K562 (cell line): ENCODE measurements at regions of chr14 and their contacts with region 1.

Region 1: GRCh38 chr14:30656190-30656632 is 34.1 kb downstream of the SCFD1 start:
- DNase-seq: peak in 3 of 4 experiments; percentile 13 to 37 (median 14)
- ATAC-seq: peak; percentile 70
- H3K4me3 ChIP-seq: no peak overlapping the region
- H3K27ac ChIP-seq: no peak overlapping the region
- H3K4me1 ChIP-seq: peaks cover 0 to 3% of the 10 kb centered on the region in 2 experiments; a peak in 1 of 5 replicates
- H3K27me3 ChIP-seq: no peaks in the 10 kb centered on the region
- CTCF ChIP-seq: peak; percentile 45 to 61 (median 57)
- EP300 ChIP-seq: no peak
- POLR2A ChIP-seq: no peak
- RAD21 ChIP-seq: peak in 1 of 2 experiments; percentile 26; a peak in 2 of 4 replicates

Region 2: GRCh38 chr14:30681752-30682355 is 25.6 kb after region 1 on chr14:
- CTCF ChIA-PET with region 1: no interaction called
- POLR2A ChIA-PET with region 1: no interaction called
- in situ Hi-C with region 1: no loop called
- intact Hi-C with region 1: loop called (anchors 1 kb)
- DNase-seq: peak in 1 of 4 experiments; percentile 7
- ATAC-seq: no peak
- H3K4me3 ChIP-seq: no peak overlapping the region
- H3K27ac ChIP-seq: no peak overlapping the region
- H3K4me1 ChIP-seq: no peaks in the 10 kb centered on the region
- H3K27me3 ChIP-seq: no peaks in the 10 kb centered on the region
- CTCF ChIP-seq: peak in 1 of 3 experiments; percentile 37; a peak in 2 of 6 replicates
- EP300 ChIP-seq: no peak
- POLR2A ChIP-seq: no peak
- RAD21 ChIP-seq: no peak

Region 3: DNA sequence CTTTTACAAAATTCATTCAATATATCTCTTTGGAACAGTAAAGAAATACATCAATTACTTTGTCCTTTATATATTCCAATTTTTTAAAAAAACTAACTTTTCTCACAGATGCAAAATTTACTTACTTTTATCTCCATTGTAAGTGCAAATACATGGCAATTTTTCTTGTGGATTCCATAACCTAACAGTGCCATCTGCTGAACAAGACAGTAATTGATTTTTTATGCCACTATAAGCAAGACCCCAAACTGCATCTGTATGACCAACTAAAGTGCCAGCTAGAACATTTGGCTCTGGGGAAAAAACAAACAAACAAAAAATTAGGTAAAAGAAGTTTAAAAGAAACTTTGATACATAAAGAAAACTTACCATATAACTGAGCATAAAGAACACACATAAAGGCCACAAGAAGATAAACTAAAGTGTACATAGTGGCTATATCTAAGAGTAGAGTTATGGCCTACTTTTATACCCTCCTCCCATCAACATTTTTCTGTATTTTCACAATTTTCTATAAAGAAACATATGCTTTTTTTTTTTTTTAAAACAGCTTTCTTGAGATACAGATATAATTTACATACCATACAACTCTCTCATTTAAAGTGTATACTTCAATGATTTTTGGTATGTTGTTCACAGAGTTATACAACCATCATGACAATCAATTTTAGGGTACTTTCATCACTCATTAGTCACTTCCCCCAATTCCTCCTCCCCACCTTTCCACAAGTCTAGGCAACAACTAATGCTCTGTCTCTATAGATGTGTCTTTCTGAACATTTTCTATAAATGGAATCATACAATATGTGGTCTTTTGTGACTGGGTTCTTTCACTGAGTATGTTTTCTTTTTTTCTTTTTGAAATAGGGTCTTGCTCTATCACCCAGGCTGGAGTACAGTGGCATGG is 250.8 kb after region 1 on chr14:
- CTCF ChIA-PET with region 1: interaction called, 10 read pairs
- POLR2A ChIA-PET with region 1: no interaction called
- in situ Hi-C with region 1: no loop called
- intact Hi-C with region 1: loop called (anchors 2 kb)
- DNase-seq: no peak
- ATAC-seq: peak; percentile 53
- H3K4me3 ChIP-seq: no peak overlapping the region
- H3K27ac ChIP-seq: no peak overlapping the region
- H3K4me1 ChIP-seq: peaks cover 0 to 6% of the 10 kb centered on the region in 2 experiments; a peak in 2 of 5 replicates
- H3K27me3 ChIP-seq: no peaks in the 10 kb centered on the region
- CTCF ChIP-seq: peak in 1 of 3 experiments; percentile 28; a peak in 1 of 6 replicates
- EP300 ChIP-seq: no peak
- POLR2A ChIP-seq: no peak
- RAD21 ChIP-seq: peak in 1 of 2 experiments; percentile 43; a peak in 2 of 4 replicates